ENCODE measurements at regions of chr3 and their contacts with region 1.

Region 1: DNA sequence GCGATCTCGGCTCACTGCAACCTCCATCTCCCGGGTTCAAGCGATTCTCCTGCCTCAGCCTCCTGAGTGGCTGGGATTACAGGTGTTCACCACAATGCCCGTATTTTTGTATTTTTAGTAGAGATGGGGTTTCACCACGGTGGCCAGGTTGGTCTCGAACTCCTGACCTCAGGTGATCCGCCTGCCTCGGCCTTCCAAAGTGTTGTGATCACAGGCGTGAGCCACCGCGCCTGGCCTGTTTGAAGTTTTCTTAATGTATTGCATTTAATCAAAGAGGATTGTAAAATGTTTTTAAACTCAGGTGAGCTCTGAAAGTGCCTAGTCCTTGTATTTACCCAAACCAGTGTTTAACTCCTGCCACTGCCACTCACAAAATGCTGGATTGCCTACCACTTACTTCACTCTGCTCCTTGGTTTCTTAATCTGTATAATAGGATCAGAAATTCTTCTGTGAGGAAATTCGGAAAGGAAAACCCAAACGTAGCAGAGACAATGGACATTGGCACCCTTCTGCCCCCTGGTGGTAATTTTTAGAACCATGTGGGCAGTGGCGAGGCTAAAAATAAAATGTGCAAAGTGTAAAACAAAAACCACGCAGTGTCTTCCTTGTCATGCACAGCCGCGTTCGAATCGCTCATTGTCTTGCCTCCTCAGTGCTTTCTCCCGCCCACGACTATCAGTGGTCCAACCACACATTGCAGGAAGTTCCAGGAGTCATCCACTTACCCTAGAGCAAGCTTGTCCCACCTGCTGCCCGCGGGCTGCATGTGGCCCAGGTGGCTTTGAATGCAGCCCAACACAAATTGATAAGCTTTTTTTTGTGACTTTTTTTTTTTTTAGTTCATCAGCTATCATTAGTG is 27.3 kb downstream of the CEP19 start:
- DNase-seq: peak; percentile 44 to 85 (median 54)
- ATAC-seq: peak; percentile 91
- H3K4me3 ChIP-seq: peak overlapping the region; percentile 15
- H3K4me3 Mint-ChIP-seq: peak overlapping the region; percentile 74
- H3K27ac ChIP-seq: no peak overlapping the region
- H3K27ac Mint-ChIP-seq: peak overlapping the region; percentile 60
- H3K4me1 ChIP-seq: peaks cover 11% of the 10 kb centered on the region
- H3K4me1 Mint-ChIP-seq: peaks cover 14% of the 10 kb centered on the region
- H3K27me3 ChIP-seq: no peaks in the 10 kb centered on the region
- H3K27me3 Mint-ChIP-seq: no peaks in the 10 kb centered on the region
- CTCF ChIP-seq: peak; percentile 90

Region 2: DNA sequence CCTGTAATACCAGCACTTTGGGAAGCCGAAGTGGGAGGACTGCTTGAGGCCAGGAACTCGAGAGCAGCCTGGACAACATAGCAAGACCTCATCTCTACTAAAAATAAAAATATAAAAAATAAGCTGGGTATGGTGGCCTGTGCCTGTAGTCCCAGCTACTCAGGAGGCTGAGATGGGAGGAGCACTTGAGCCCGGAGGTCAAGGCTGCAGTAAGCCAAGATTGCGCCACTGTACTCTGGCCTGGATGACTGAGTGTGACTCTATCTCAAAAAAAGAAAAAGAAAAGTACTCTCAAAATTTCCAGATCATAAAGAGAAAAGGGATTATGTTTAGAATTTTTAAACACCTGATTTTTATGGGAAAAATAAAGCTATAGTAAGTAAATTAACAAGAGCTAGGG is 444.4 kb before region 1 on chr3:
- CTCF ChIA-PET with region 1: no interaction called
- POLR2A ChIA-PET with region 1: no interaction called
- intact Hi-C with region 1: no loop called
- DNase-seq: no peak
- ATAC-seq: no peak
- H3K4me3 ChIP-seq: no peak overlapping the region
- H3K4me3 Mint-ChIP-seq: no peak overlapping the region
- H3K27ac ChIP-seq: no peak overlapping the region
- H3K27ac Mint-ChIP-seq: no peak overlapping the region
- H3K4me1 ChIP-seq: no peaks in the 10 kb centered on the region
- H3K4me1 Mint-ChIP-seq: no peaks in the 10 kb centered on the region
- H3K27me3 ChIP-seq: no peaks in the 10 kb centered on the region
- H3K27me3 Mint-ChIP-seq: no peaks in the 10 kb centered on the region
- CTCF ChIP-seq: no peak

Region 3: DNA sequence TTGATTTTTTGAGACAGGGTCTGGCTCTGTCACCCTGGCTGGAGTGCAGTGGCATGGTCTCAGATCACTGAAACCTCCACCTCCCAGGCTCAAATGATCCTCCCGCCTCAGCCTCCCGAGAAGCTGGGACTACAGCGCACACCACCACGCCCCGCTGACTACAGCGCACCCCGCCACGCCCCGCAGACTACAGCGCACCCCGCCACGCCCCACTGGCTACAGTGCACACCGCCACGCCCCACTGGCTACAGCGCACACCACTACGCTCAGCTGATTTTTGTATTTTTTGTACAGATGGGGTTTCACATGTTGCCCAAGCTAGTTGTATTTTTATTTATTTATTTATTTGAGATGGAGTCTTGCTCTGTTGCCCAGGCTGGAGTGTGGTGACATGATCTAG is 432.9 kb before region 1 on chr3:
- CTCF ChIA-PET with region 1: no interaction called
- POLR2A ChIA-PET with region 1: no interaction called
- intact Hi-C with region 1: loop called (anchors 2 kb)
- DNase-seq: peak in 1 of 14 experiments; percentile 17
- ATAC-seq: no peak
- H3K4me3 ChIP-seq: no peak overlapping the region
- H3K4me3 Mint-ChIP-seq: no peak overlapping the region
- H3K27ac ChIP-seq: no peak overlapping the region
- H3K27ac Mint-ChIP-seq: no peak overlapping the region
- H3K4me1 ChIP-seq: peaks cover 7% of the 10 kb centered on the region
- H3K4me1 Mint-ChIP-seq: peaks cover 5% of the 10 kb centered on the region
- H3K27me3 ChIP-seq: no peaks in the 10 kb centered on the region
- H3K27me3 Mint-ChIP-seq: no peaks in the 10 kb centered on the region
- CTCF ChIP-seq: no peak

Region 4: GRCh38 chr3:196537319-196537984 is 147.3 kb before region 1 on chr3:
- CTCF ChIA-PET with region 1: no interaction called
- POLR2A ChIA-PET with region 1: no interaction called
- intact Hi-C with region 1: loop called (anchors 2 to 5 kb)
- DNase-seq: peak; percentile 43 to 83 (median 63)
- ATAC-seq: no peak
- H3K4me3 ChIP-seq: no peak overlapping the region
- H3K4me3 Mint-ChIP-seq: no peak overlapping the region
- H3K27ac ChIP-seq: no peak overlapping the region
- H3K27ac Mint-ChIP-seq: no peak overlapping the region
- H3K4me1 ChIP-seq: peaks cover 3% of the 10 kb centered on the region
- H3K4me1 Mint-ChIP-seq: no peaks in the 10 kb centered on the region
- H3K27me3 ChIP-seq: no peaks in the 10 kb centered on the region
- H3K27me3 Mint-ChIP-seq: no peaks in the 10 kb centered on the region
- CTCF ChIP-seq: peak; percentile 91

Region 5: GRCh38 chr3:196632046-196632751 is 52.6 kb before region 1 on chr3:
- CTCF ChIA-PET with region 1: interaction called, 9 read pairs
- POLR2A ChIA-PET with region 1: interaction called, 6 read pairs
- intact Hi-C with region 1: loop called in 1 of 2 experiments (anchors 2 kb)
- DNase-seq: peak; percentile 72 to 96 (median 87)
- ATAC-seq: peak; percentile 83
- H3K4me3 ChIP-seq: peak overlapping the region; percentile 72
- H3K4me3 Mint-ChIP-seq: peak overlapping the region; percentile 90
- H3K27ac ChIP-seq: peak overlapping the region; percentile 90
- H3K27ac Mint-ChIP-seq: peak overlapping the region; percentile 94
- H3K4me1 ChIP-seq: peaks cover 69% of the 10 kb centered on the region
- H3K4me1 Mint-ChIP-seq: peaks cover 67% of the 10 kb centered on the region
- H3K27me3 ChIP-seq: no peaks in the 10 kb centered on the region
- H3K27me3 Mint-ChIP-seq: no peaks in the 10 kb centered on the region
- CTCF ChIP-seq: no peak

Region 6: GRCh38 chr3:197835509-197835908 is 1150.7 kb after region 1 on chr3:
- CTCF ChIA-PET with region 1: no interaction called
- POLR2A ChIA-PET with region 1: no interaction called
- intact Hi-C with region 1: no loop called
- DNase-seq: no peak
- ATAC-seq: no peak
- H3K4me3 ChIP-seq: no peak overlapping the region
- H3K4me3 Mint-ChIP-seq: no peak overlapping the region
- H3K27ac ChIP-seq: no peak overlapping the region
- H3K27ac Mint-ChIP-seq: no peak overlapping the region
- H3K4me1 ChIP-seq: no peaks in the 10 kb centered on the region
- H3K4me1 Mint-ChIP-seq: no peaks in the 10 kb centered on the region
- H3K27me3 ChIP-seq: no peaks in the 10 kb centered on the region
- H3K27me3 Mint-ChIP-seq: no peaks in the 10 kb centered on the region
- CTCF ChIP-seq: no peak